ENCODE measurements at regions of chr21 and their contacts with region 1.

Region 1: GRCh38 chr21:45846373-45847160 is 135.0 kb upstream of the COL6A1 start:
- DNase-seq: no peak
- H3K4me3 ChIP-seq: no peak overlapping the region
- H3K4me3 Mint-ChIP-seq: no peak overlapping the region
- H3K27ac ChIP-seq: no peak overlapping the region
- H3K27ac Mint-ChIP-seq: no peak overlapping the region
- H3K4me1 ChIP-seq: no peaks in the 10 kb centered on the region
- H3K4me1 Mint-ChIP-seq: peaks cover 1% of the 10 kb centered on the region
- H3K27me3 ChIP-seq: no peaks in the 10 kb centered on the region
- H3K27me3 Mint-ChIP-seq: peaks cover 0 to 2% (median 0%) of the 10 kb centered on the region in 3 donors
- CTCF ChIP-seq: no peak

Region 2: GRCh38 chr21:45788637-45789506 is 57.7 kb before region 1 on chr21:
- intact Hi-C with region 1: loop called in 1 of 2 experiments (anchors 10 kb)
- DNase-seq: no peak
- H3K4me3 ChIP-seq: no peak overlapping the region
- H3K4me3 Mint-ChIP-seq: no peak overlapping the region
- H3K27ac ChIP-seq: no peak overlapping the region
- H3K27ac Mint-ChIP-seq: no peak overlapping the region
- H3K4me1 ChIP-seq: no peaks in the 10 kb centered on the region
- H3K4me1 Mint-ChIP-seq: no peaks in the 10 kb centered on the region
- H3K27me3 ChIP-seq: no peaks in the 10 kb centered on the region
- H3K27me3 Mint-ChIP-seq: no peaks in the 10 kb centered on the region
- CTCF ChIP-seq: no peak

Region 3: GRCh38 chr21:45899322-45900033 is 52.9 kb after region 1 on chr21:
- intact Hi-C with region 1: no loop called
- DNase-seq: no peak
- H3K4me3 ChIP-seq: no peak overlapping the region
- H3K4me3 Mint-ChIP-seq: no peak overlapping the region
- H3K27ac ChIP-seq: no peak overlapping the region
- H3K27ac Mint-ChIP-seq: no peak overlapping the region
- H3K4me1 ChIP-seq: no peaks in the 10 kb centered on the region
- H3K4me1 Mint-ChIP-seq: no peaks in the 10 kb centered on the region
- H3K27me3 ChIP-seq: no peaks in the 10 kb centered on the region
- H3K27me3 Mint-ChIP-seq: peaks cover 0 to 5% (median 1%) of the 10 kb centered on the region in 3 donors
- CTCF ChIP-seq: no peak

Region 4: DNA sequence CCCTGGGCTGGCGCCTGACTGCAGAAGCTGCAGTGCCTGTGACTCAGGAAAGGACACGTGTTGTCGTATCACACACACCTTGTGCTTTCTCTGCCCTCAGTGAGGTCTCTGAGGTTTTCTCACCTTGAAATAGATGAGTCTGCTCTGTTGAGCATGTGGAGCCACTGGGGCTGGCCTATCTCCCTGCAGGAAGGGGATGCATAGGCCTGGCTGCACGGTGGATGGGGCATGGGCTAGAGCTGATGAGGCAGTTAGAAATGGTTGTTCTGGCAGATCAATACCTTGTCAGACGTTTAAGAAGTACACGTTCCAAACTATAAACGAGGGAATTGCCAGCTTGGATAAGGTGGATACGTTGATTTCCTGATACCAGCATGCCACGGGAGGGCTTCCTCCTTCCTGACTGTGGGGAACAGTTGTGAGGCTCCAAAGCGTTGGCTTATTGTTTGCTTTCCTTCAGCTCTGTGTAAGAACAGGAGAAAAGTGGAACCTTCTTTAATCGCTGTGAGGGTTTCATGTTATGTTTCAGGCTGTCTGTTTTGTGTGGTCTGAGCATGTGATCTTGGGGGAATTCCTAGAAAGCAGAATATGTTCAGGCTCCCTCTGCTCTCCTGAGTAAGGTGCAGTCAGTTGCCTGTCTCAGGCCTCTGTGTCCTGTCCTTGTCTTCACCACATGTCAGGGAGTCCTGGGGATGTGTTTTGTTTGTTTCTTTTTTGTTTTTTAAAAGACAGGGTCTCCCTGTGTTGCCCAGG is 522.1 kb after region 1 on chr21:
- intact Hi-C with region 1: no loop called
- DNase-seq: no peak
- H3K4me3 ChIP-seq: no peak overlapping the region
- H3K4me3 Mint-ChIP-seq: no peak overlapping the region
- H3K27ac ChIP-seq: peak overlapping the region in 1 of 2 donors; percentile 50
- H3K27ac Mint-ChIP-seq: peak overlapping the region in 5 of 7 donors; percentile 16 to 79 (median 56)
- H3K4me1 ChIP-seq: peaks cover 8 to 14% of the 10 kb centered on the region in 2 donors
- H3K4me1 Mint-ChIP-seq: peaks cover 14% of the 10 kb centered on the region
- H3K27me3 ChIP-seq: no peaks in the 10 kb centered on the region
- H3K27me3 Mint-ChIP-seq: peaks cover 0 to 2% (median 0%) of the 10 kb centered on the region in 3 donors
- CTCF ChIP-seq: no peak

Measured in CD14-positive monocyte (primary cell).